ENCODE measurements at regions of chr6 and their contacts with region 1.

Region 1: GRCh38 chr6:131923356-131923755 is 27.8 kb downstream of the CCN2 start:
- DNase-seq: peak; percentile 65 to 73
- H3K4me3 ChIP-seq: no peak overlapping the region
- H3K4me3 Mint-ChIP-seq: no peak overlapping the region
- H3K27ac Mint-ChIP-seq: no peak overlapping the region
- H3K4me1 ChIP-seq: no peaks in the 10 kb centered on the region
- H3K4me1 Mint-ChIP-seq: no peaks in the 10 kb centered on the region
- H3K27me3 ChIP-seq: no peaks in the 10 kb centered on the region
- H3K27me3 Mint-ChIP-seq: peaks cover 4% of the 10 kb centered on the region
- CTCF ChIP-seq: peak; percentile 75 to 77

Region 2: GRCh38 chr6:131755597-131755996 is 167.8 kb before region 1 on chr6:
- CTCF ChIA-PET with region 1: no interaction called
- POLR2A ChIA-PET with region 1: no interaction called
- intact Hi-C with region 1: no loop called
- DNase-seq: no peak
- H3K4me3 ChIP-seq: no peak overlapping the region
- H3K4me3 Mint-ChIP-seq: no peak overlapping the region
- H3K27ac Mint-ChIP-seq: no peak overlapping the region
- H3K4me1 ChIP-seq: no peaks in the 10 kb centered on the region
- H3K4me1 Mint-ChIP-seq: no peaks in the 10 kb centered on the region
- H3K27me3 ChIP-seq: no peaks in the 10 kb centered on the region
- H3K27me3 Mint-ChIP-seq: peaks cover 7% of the 10 kb centered on the region
- CTCF ChIP-seq: no peak

Region 3: GRCh38 chr6:132011582-132011981 is 88.2 kb after region 1 on chr6:
- CTCF ChIA-PET with region 1: no interaction called
- POLR2A ChIA-PET with region 1: no interaction called
- intact Hi-C with region 1: no loop called
- DNase-seq: no peak
- H3K4me3 ChIP-seq: no peak overlapping the region
- H3K4me3 Mint-ChIP-seq: no peak overlapping the region
- H3K27ac Mint-ChIP-seq: no peak overlapping the region
- H3K4me1 ChIP-seq: no peaks in the 10 kb centered on the region
- H3K4me1 Mint-ChIP-seq: no peaks in the 10 kb centered on the region
- H3K27me3 ChIP-seq: no peaks in the 10 kb centered on the region
- H3K27me3 Mint-ChIP-seq: no peaks in the 10 kb centered on the region
- CTCF ChIP-seq: no peak

Region 4: GRCh38 chr6:132161283-132161682 is 237.9 kb after region 1 on chr6:
- CTCF ChIA-PET with region 1: interaction called, 6 read pairs
- POLR2A ChIA-PET with region 1: no interaction called
- intact Hi-C with region 1: loop called (anchors 1 kb)
- DNase-seq: peak in 1 of 2 experiments; percentile 45
- H3K4me3 ChIP-seq: no peak overlapping the region
- H3K4me3 Mint-ChIP-seq: no peak overlapping the region
- H3K27ac Mint-ChIP-seq: no peak overlapping the region
- H3K4me1 ChIP-seq: no peaks in the 10 kb centered on the region
- H3K4me1 Mint-ChIP-seq: no peaks in the 10 kb centered on the region
- H3K27me3 ChIP-seq: no peaks in the 10 kb centered on the region
- H3K27me3 Mint-ChIP-seq: no peaks in the 10 kb centered on the region
- CTCF ChIP-seq: peak; percentile 47 to 65

Region 5: GRCh38 chr6:132218059-132218696 is 294.8 kb after region 1 on chr6:
- CTCF ChIA-PET with region 1: interaction called, 12 read pairs
- POLR2A ChIA-PET with region 1: no interaction called
- intact Hi-C with region 1: loop called (anchors 1 kb)
- DNase-seq: no peak
- H3K4me3 ChIP-seq: no peak overlapping the region
- H3K4me3 Mint-ChIP-seq: no peak overlapping the region
- H3K27ac Mint-ChIP-seq: no peak overlapping the region
- H3K4me1 ChIP-seq: no peaks in the 10 kb centered on the region
- H3K4me1 Mint-ChIP-seq: no peaks in the 10 kb centered on the region
- H3K27me3 ChIP-seq: no peaks in the 10 kb centered on the region
- H3K27me3 Mint-ChIP-seq: peaks cover 4% of the 10 kb centered on the region
- CTCF ChIP-seq: peak; percentile 32 to 41

Region 6: DNA sequence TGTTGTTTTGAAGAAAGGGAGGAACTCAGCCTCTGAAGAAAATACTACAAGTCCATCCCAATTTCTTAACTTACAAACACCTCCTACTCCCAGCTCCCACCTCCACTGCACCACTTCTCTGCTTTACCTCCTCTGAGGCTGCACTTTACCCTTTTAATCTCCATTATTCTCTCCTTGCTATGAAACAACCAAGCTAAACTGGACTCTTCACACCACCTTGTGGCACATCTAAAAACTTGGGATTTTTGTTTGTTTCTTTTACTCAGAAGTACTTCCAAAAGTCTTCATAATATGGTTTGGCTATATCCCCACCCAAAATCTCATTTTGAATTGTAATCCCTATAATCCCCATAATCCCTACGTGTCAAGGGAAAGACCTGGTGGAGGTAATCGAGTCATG is 335.7 kb after region 1 on chr6:
- CTCF ChIA-PET with region 1: no interaction called
- POLR2A ChIA-PET with region 1: no interaction called
- intact Hi-C with region 1: loop called (anchors 1 kb)
- DNase-seq: peak in 1 of 2 experiments; percentile 4
- H3K4me3 ChIP-seq: no peak overlapping the region
- H3K4me3 Mint-ChIP-seq: no peak overlapping the region
- H3K27ac Mint-ChIP-seq: no peak overlapping the region
- H3K4me1 ChIP-seq: no peaks in the 10 kb centered on the region
- H3K4me1 Mint-ChIP-seq: no peaks in the 10 kb centered on the region
- H3K27me3 ChIP-seq: no peaks in the 10 kb centered on the region
- H3K27me3 Mint-ChIP-seq: peaks cover 10% of the 10 kb centered on the region
- CTCF ChIP-seq: peak in 1 of 2 experiments; percentile 17

Region 7: GRCh38 chr6:132279592-132280139 is 356.3 kb after region 1 on chr6:
- CTCF ChIA-PET with region 1: interaction called, 4 read pairs
- POLR2A ChIA-PET with region 1: no interaction called
- intact Hi-C with region 1: loop called (anchors 1 kb)
- DNase-seq: peak; percentile 57 to 75
- H3K4me3 ChIP-seq: peak overlapping the region; percentile 40
- H3K4me3 Mint-ChIP-seq: peak overlapping the region; percentile 70
- H3K27ac Mint-ChIP-seq: no peak overlapping the region
- H3K4me1 ChIP-seq: no peaks in the 10 kb centered on the region
- H3K4me1 Mint-ChIP-seq: no peaks in the 10 kb centered on the region
- H3K27me3 ChIP-seq: no peaks in the 10 kb centered on the region
- H3K27me3 Mint-ChIP-seq: peaks cover 10% of the 10 kb centered on the region
- CTCF ChIP-seq: peak; percentile 64 to 85

Measured in Caco-2 (cell line).